ENCODE measurements at regions of chr1 and their contacts with region 1.

Region 1: DNA sequence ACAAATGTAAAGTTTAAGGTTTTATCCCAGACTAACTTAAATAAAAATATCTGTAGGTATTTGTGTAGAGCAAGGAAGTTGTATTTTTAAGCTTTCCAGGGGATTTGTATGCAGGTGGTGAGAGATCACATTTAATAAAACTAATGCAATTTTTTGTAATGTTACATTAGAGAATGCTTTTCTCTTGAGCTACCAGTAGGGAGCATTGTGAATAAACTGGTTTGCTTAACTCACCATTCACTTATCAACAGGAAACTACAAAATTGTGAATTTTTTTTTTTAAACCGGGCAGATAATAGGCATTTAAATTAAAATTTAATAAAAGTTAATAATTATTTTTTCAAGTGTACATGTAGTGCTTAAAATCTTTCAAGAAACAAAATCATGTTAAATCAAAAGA is 78.6 kb downstream of the IVNS1ABP start:
- DNase-seq: peak in 6 of 9 donors; percentile 11 to 49 (median 35)
- ATAC-seq: peak; percentile 64
- H3K4me3 ChIP-seq: no peak overlapping the region
- H3K4me3 Mint-ChIP-seq: peak overlapping the region in 9 of 10 donors; percentile 3 to 73 (median 45)
- H3K27ac ChIP-seq: no peak overlapping the region
- H3K27ac Mint-ChIP-seq: peak overlapping the region in 4 of 9 donors; percentile 3 to 81 (median 13)
- H3K4me1 ChIP-seq: peaks cover 7 to 10% of the 10 kb centered on the region in 2 donors
- H3K4me1 Mint-ChIP-seq: peaks cover 5 to 33% (median 29%) of the 10 kb centered on the region in 7 donors
- H3K27me3 ChIP-seq: no peaks in the 10 kb centered on the region
- H3K27me3 Mint-ChIP-seq: no peaks in the 10 kb centered on the region

Region 2: DNA sequence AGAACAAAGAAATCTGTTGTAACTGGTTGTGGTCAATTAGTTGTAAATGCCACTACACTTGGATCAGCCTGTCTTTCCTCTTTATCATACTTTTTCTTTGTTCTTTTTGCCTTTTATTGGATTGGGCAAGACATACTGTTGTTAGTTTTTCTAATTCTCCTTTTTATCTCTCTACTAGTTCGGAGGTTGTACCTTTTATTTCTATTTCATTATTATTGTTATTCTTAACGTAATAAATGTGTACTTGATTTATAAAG is 19.4 kb after region 1 on chr1:
- CTCF ChIA-PET with region 1: no interaction called
- POLR2A ChIA-PET with region 1: no interaction called
- intact Hi-C with region 1: loop called in 1 of 2 experiments (anchors 2 kb)
- DNase-seq: no peak
- ATAC-seq: no peak
- H3K4me3 ChIP-seq: no peak overlapping the region
- H3K4me3 Mint-ChIP-seq: peak overlapping the region in 9 of 10 donors; percentile 26 to 70 (median 50)
- H3K27ac ChIP-seq: no peak overlapping the region
- H3K27ac Mint-ChIP-seq: peak overlapping the region in 7 of 9 donors; percentile 8 to 84 (median 64)
- H3K4me1 ChIP-seq: peaks cover 0 to 6% of the 10 kb centered on the region in 2 donors
- H3K4me1 Mint-ChIP-seq: peaks cover 5 to 27% (median 20%) of the 10 kb centered on the region in 7 donors
- H3K27me3 ChIP-seq: no peaks in the 10 kb centered on the region
- H3K27me3 Mint-ChIP-seq: peaks cover 0 to 2% (median 0%) of the 10 kb centered on the region in 5 donors

Region 3: DNA sequence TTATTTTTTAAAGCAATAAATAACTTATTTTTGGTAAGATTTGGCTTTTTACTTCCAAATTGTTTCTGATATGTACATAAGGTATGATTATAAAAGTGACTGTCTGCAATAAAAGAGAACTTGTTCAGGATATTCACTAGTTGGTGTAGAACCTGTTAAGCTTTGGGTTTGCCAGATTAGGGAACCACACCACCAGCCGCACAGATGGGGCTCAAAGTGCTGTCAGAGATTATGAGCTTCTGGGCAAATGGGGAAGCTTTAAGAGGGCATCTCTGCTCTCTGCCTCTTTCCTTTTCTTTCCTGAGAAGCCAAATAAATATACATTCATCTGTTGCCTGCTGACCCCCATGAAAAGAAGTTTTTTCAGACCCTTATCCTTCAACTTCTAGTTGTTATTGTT is 53.2 kb after region 1 on chr1:
- CTCF ChIA-PET with region 1: interaction called, 10 read pairs
- POLR2A ChIA-PET with region 1: interaction called, 4 read pairs
- intact Hi-C with region 1: loop called in 1 of 2 experiments (anchors 2 kb)
- DNase-seq: no peak
- ATAC-seq: peak; percentile 54
- H3K4me3 ChIP-seq: no peak overlapping the region
- H3K4me3 Mint-ChIP-seq: no peak overlapping the region
- H3K27ac ChIP-seq: no peak overlapping the region
- H3K27ac Mint-ChIP-seq: peak overlapping the region in 5 of 9 donors; percentile 9 to 88 (median 74)
- H3K4me1 ChIP-seq: peaks cover 0 to 13% of the 10 kb centered on the region in 2 donors
- H3K4me1 Mint-ChIP-seq: peaks cover 11 to 59% (median 43%) of the 10 kb centered on the region in 7 donors
- H3K27me3 ChIP-seq: no peaks in the 10 kb centered on the region
- H3K27me3 Mint-ChIP-seq: no peaks in the 10 kb centered on the region

Region 4: GRCh38 chr1:185595835-185596667 is 357.6 kb after region 1 on chr1:
- CTCF ChIA-PET with region 1: interaction called, 11 read pairs
- POLR2A ChIA-PET with region 1: interaction called, 6 read pairs
- intact Hi-C with region 1: loop called in 1 of 2 experiments (anchors 2 kb)
- DNase-seq: peak; percentile 16 to 61 (median 45)
- ATAC-seq: peak; percentile 80
- H3K4me3 ChIP-seq: no peak overlapping the region
- H3K4me3 Mint-ChIP-seq: no peak overlapping the region
- H3K27ac ChIP-seq: no peak overlapping the region
- H3K27ac Mint-ChIP-seq: peak overlapping the region in 5 of 9 donors; percentile 17 to 72 (median 51)
- H3K4me1 ChIP-seq: peaks cover 0 to 5% of the 10 kb centered on the region in 2 donors
- H3K4me1 Mint-ChIP-seq: peaks cover 13 to 36% (median 32%) of the 10 kb centered on the region in 7 donors
- H3K27me3 ChIP-seq: no peaks in the 10 kb centered on the region
- H3K27me3 Mint-ChIP-seq: no peaks in the 10 kb centered on the region

Region 5: GRCh38 chr1:185694081-185694480 is 455.6 kb after region 1 on chr1:
- CTCF ChIA-PET with region 1: interaction called, 4 read pairs
- POLR2A ChIA-PET with region 1: interaction called, 3 read pairs
- intact Hi-C with region 1: loop called in 1 of 2 experiments (anchors 1 kb)
- DNase-seq: peak in 4 of 9 donors; percentile 20 to 26 (median 22)
- ATAC-seq: peak; percentile 60
- H3K4me3 ChIP-seq: peak overlapping the region; percentile 31
- H3K4me3 Mint-ChIP-seq: peak overlapping the region; percentile 73 to 85 (median 78)
- H3K27ac ChIP-seq: peak overlapping the region; percentile 50
- H3K27ac Mint-ChIP-seq: peak overlapping the region; percentile 77 to 96 (median 88)
- H3K4me1 ChIP-seq: peaks cover 0 to 17% of the 10 kb centered on the region in 2 donors
- H3K4me1 Mint-ChIP-seq: peaks cover 11 to 27% (median 14%) of the 10 kb centered on the region in 7 donors
- H3K27me3 ChIP-seq: no peaks in the 10 kb centered on the region
- H3K27me3 Mint-ChIP-seq: peaks cover 0 to 27% (median 9%) of the 10 kb centered on the region in 5 donors